AG04450 (cell line): ENCODE measurements at regions of chr4 and their contacts with region 1.

Region 1: DNA sequence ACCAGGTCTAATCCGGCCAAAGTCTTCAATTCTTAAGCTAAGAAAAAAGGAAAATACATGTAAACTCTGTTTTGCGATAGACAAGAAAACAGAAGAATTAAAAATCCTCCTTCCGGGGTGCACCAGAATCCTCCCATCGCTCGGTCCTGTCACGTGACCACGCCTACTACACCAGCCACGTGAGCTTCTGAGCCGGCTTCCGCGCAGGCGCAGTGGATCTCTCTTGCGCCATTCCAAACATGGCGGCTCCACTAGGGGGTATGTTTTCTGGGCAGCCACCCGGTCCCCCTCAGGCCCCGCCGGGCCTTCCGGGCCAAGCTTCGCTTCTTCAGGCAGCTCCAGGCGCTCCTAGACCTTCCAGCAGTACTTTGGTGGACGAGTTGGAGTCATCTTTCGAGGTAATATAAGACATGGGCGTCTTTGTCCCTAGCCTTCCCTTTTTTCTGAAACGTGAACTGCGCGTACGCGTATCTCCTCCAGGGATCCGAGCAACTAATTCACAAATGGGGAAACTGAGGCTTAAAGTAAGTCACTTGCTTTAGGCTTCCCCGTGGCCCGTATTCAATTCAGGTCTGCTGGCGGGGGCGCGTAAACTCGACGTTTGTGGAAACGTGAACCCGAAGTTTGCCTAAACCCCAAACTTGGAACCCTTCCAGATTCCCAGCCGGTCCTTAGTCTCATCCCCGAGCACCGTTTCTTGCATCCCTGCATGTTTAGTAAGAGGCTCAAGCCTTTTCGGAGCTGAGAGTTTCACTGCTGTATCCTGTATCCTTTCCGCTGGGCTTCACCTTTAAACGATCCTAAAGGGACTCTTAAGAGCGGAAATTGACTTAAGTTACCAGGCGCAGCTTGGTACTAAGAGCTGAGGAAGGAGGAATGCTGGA is at the start of gene MED28:
- DNase-seq: peak; percentile 93
- H3K4me3 ChIP-seq: peak within 1 kb of the TSS; percentile 92
- H3K27ac ChIP-seq: peak within 1 kb of the TSS; percentile 97
- H3K27me3 ChIP-seq: no peaks in the 10 kb centered on the region
- CTCF ChIP-seq: no peak; the same call in 1 of the 2 replicates
- polyA plus RNA-seq, gene MED28: 30.6 and 48.6 TPM in 2 replicates

Region 2: DNA sequence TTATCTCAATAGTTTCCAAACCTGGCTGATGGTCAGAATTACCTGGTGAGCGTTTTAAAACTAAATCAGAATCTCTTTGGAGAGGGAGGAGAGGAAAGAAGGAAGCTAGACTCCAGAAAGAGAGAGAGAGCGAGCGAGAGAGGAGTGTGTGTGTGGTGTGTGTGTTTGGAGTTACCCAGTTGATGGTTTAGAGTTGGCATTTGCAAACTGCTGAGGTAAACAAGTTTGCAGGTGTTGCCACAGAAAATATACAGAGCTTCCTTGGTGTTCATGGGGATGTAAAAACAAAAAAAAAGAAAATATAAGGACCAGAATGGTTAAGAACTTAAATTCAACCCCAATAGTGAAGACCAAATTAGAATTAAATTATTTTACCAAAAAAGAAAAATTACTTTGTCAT is 64.1 kb before region 1 on chr4:
- CTCF ChIA-PET with region 1: interaction called, 19 read pairs
- POLR2A ChIA-PET with region 1: interaction called, 3 read pairs
- DNase-seq: no peak
- H3K4me3 ChIP-seq: no peak overlapping the region
- H3K27ac ChIP-seq: no peak overlapping the region
- H3K27me3 ChIP-seq: peaks cover 10% of the 10 kb centered on the region
- CTCF ChIP-seq: no peak

Region 3: GRCh38 chr4:17576932-17577665 is 37.6 kb before region 1 on chr4 and contains the start of gene LAP3:
- CTCF ChIA-PET with region 1: no interaction called
- POLR2A ChIA-PET with region 1: interaction called, 19 read pairs
- DNase-seq: peak; percentile 92
- H3K4me3 ChIP-seq: peak within 1 kb of the TSS; percentile 74
- H3K27ac ChIP-seq: peak within 1 kb of the TSS; percentile 80
- H3K27me3 ChIP-seq: no peaks in the 10 kb centered on the region
- CTCF ChIP-seq: no peak
- polyA plus RNA-seq, gene LAP3: 57.2 and 63.3 TPM in 2 replicates

Region 4: GRCh38 chr4:17636696-17637622 is 22.3 kb after region 1 on chr4:
- CTCF ChIA-PET with region 1: interaction called, 23 read pairs
- POLR2A ChIA-PET with region 1: interaction called, 3 read pairs
- DNase-seq: peak; percentile 37
- H3K4me3 ChIP-seq: no peak overlapping the region
- H3K27ac ChIP-seq: no peak overlapping the region
- H3K27me3 ChIP-seq: no peaks in the 10 kb centered on the region
- CTCF ChIP-seq: peak; percentile 88